Natural killer cell (primary cell): ENCODE measurements at regions of chr9 and their contacts with region 1.

Region 1: GRCh38 chr9:26892251-26893029 is at the start of gene CAAP1:
- DNase-seq: peak; percentile 91 to 96
- ATAC-seq: peak; percentile 93 to 97 (median 94)
- H3K4me3 ChIP-seq: peak within 1 kb of the TSS; percentile 95
- H3K4me3 Mint-ChIP-seq: peak within 1 kb of the TSS; percentile 100
- H3K27ac ChIP-seq: peak within 1 kb of the TSS; percentile 94
- H3K27ac Mint-ChIP-seq: peak within 1 kb of the TSS; percentile 99
- H3K4me1 ChIP-seq: peaks cover 14% of the 10 kb centered on the region
- H3K4me1 Mint-ChIP-seq: peaks cover 32 to 35% of the 10 kb centered on the region in 2 donors
- H3K27me3 ChIP-seq: no peaks in the 10 kb centered on the region
- H3K27me3 Mint-ChIP-seq: no peaks in the 10 kb centered on the region
- CTCF ChIP-seq: peak; percentile 48
- total RNA-seq, gene CAAP1: 12.6 to 16.8 (median 15.2) TPM

Region 2: DNA sequence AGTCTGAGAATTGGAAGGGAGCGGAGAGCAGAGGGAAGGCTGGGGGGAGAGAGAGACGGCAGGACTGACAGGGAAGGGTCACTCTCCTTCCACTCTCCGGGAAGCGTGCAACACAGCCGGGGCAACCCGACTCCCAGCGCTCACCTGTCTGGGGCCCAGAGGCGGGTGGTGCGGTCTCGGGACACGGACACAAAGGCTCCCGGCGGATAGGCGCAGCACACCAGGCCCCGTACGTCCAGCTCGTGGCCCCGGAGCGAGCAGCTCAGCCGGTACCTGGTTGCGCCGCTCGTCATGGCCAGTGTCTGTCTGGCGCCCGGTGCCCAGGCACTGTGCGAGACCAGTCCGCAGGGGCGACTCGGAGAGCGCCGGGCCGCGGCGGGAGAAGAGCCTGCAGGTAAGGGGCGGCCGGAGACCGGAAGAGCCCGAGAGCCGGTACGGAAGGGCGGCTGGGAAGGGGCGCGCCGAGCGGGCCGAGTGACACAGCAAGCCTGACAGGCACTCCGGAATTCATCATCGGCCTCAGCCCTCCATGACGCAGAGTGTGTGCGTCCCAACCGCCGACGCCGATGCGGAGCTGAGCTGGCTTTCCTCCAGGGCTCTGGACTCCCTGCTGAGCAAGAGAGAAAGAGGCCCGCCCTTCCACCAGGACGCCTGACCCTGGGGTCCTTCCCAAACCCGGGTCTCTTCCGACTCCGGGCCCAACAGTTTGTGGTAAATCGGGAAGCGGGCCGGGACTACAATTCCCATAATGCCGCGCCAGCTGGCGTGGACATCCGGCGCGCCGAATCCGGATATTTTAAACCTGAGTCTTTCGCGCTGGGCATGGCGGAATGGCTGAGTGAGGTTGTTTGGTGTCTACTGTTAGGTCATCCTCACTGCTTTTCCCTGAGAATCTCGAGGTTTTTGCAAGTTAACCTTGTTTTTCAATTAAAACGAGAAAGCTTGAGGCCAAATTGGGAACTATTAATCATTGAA is 54.6 kb after region 1 on chr9 and contains the start of gene PLAA:
- intact Hi-C with region 1: loop called (anchors 1 kb)
- DNase-seq: peak; percentile 87 to 92
- ATAC-seq: peak; percentile 93 to 97 (median 95)
- H3K4me3 ChIP-seq: peak within 1 kb of the TSS; percentile 76
- H3K4me3 Mint-ChIP-seq: peak within 1 kb of the TSS; percentile 97
- H3K27ac ChIP-seq: peak within 1 kb of the TSS; percentile 92
- H3K27ac Mint-ChIP-seq: peak within 1 kb of the TSS; percentile 99 to 100
- H3K4me1 ChIP-seq: peaks cover 14% of the 10 kb centered on the region
- H3K4me1 Mint-ChIP-seq: peaks cover 36 to 41% of the 10 kb centered on the region in 2 donors
- H3K27me3 ChIP-seq: no peaks in the 10 kb centered on the region
- H3K27me3 Mint-ChIP-seq: peaks cover 0 to 7% of the 10 kb centered on the region in 2 donors
- CTCF ChIP-seq: no peak
- total RNA-seq, gene PLAA: 38.1 to 51.2 (median 45.5) TPM

Region 3: GRCh38 chr9:26955921-26956859 is 63.8 kb after region 1 on chr9 and contains the start of gene IFT74:
- intact Hi-C with region 1: loop called (anchors 2 kb)
- DNase-seq: peak; percentile 90 to 98
- ATAC-seq: peak; percentile 99 to 100 (median 100)
- H3K4me3 ChIP-seq: peak within 1 kb of the TSS; percentile 60
- H3K4me3 Mint-ChIP-seq: peak within 1 kb of the TSS; percentile 87
- H3K27ac ChIP-seq: peak within 1 kb of the TSS; percentile 71
- H3K27ac Mint-ChIP-seq: peak within 1 kb of the TSS; percentile 84 to 89
- H3K4me1 ChIP-seq: peaks cover 11% of the 10 kb centered on the region
- H3K4me1 Mint-ChIP-seq: peaks cover 19 to 20% of the 10 kb centered on the region in 2 donors
- H3K27me3 ChIP-seq: no peaks in the 10 kb centered on the region
- H3K27me3 Mint-ChIP-seq: no peaks in the 10 kb centered on the region
- CTCF ChIP-seq: no peak
- total RNA-seq, gene IFT74: 6.0 to 8.7 (median 7.0) TPM

Region 4: GRCh38 chr9:27489087-27489876 is 596.8 kb after region 1 on chr9:
- intact Hi-C with region 1: no loop called
- DNase-seq: no peak
- ATAC-seq: no peak
- H3K4me3 ChIP-seq: no peak overlapping the region
- H3K4me3 Mint-ChIP-seq: no peak overlapping the region
- H3K27ac ChIP-seq: no peak overlapping the region
- H3K27ac Mint-ChIP-seq: no peak overlapping the region
- H3K4me1 ChIP-seq: peaks cover 10% of the 10 kb centered on the region
- H3K4me1 Mint-ChIP-seq: peaks cover 15 to 17% of the 10 kb centered on the region in 2 donors
- H3K27me3 ChIP-seq: no peaks in the 10 kb centered on the region
- H3K27me3 Mint-ChIP-seq: peaks cover 0 to 3% of the 10 kb centered on the region in 2 donors
- CTCF ChIP-seq: no peak

Region 5: DNA sequence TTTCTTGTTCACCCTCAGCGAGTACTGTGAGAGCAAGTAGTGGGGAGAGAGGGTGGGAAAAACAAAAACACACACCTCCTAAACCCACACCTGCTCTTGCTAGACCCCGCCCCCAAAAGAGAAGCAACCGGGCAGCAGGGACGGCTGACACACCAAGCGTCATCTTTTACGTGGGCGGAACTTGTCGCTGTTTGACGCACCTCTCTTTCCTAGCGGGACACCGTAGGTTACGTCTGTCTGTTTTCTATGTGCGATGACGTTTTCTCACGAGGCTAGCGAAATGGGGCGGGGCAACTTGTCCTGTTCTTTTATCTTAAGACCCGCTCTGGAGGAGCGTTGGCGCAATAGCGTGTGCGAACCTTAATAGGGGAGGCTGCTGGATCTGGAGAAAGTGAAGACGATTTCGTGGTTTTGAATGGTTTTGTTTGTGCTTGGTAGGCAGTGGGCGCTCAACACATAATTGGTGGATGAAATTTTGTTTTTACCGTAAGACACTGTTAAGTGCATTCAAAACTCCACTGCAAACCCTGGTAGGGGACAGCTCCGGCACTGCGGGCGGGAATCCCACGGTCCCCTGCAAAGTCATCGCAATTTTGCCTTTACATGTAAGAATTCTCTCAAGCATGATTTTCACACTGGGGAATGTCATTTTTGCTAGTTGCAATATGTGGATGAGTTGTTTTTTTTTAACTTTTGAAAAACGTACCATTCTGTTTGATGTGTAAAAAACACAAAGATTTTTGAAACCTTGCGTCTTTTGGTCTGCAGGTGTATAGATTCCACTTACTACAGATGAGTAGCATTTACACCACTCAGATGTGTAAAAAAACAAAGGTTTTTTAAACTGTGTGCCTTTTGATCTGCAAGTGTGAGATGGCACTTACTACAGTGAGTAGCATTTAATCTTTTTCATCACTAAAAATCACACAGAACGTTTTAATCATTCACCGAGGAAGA is 681.5 kb after region 1 on chr9:
- intact Hi-C with region 1: loop called (anchors 1 kb)
- DNase-seq: peak; percentile 90 to 100
- ATAC-seq: peak; percentile 83 to 90 (median 83)
- H3K4me3 ChIP-seq: peak overlapping the region; percentile 90
- H3K4me3 Mint-ChIP-seq: peak overlapping the region; percentile 100
- H3K27ac ChIP-seq: peak overlapping the region; percentile 99
- H3K27ac Mint-ChIP-seq: peak overlapping the region; percentile 97 to 99
- H3K4me1 ChIP-seq: peaks cover 7% of the 10 kb centered on the region
- H3K4me1 Mint-ChIP-seq: peaks cover 25 to 26% of the 10 kb centered on the region in 2 donors
- H3K27me3 ChIP-seq: no peaks in the 10 kb centered on the region
- H3K27me3 Mint-ChIP-seq: peaks cover 6 to 8% of the 10 kb centered on the region in 2 donors
- CTCF ChIP-seq: no peak